CD4-positive, alpha-beta T cell (primary cell): ENCODE measurements at regions of chr3 and their contacts with region 1.

Region 1: GRCh38 chr3:115040673-115041286 is 106.3 kb downstream of the ZBTB20 start:
- DNase-seq: peak in 13 of 14 experiments; percentile 3 to 66 (median 25)
- ATAC-seq: peak; percentile 60
- H3K4me3 ChIP-seq: no peak overlapping the region
- H3K4me3 Mint-ChIP-seq: no peak overlapping the region
- H3K27ac ChIP-seq: no peak overlapping the region
- H3K27ac Mint-ChIP-seq: no peak overlapping the region
- H3K4me1 ChIP-seq: no peaks in the 10 kb centered on the region
- H3K4me1 Mint-ChIP-seq: peaks cover 19% of the 10 kb centered on the region
- H3K27me3 ChIP-seq: no peaks in the 10 kb centered on the region
- H3K27me3 Mint-ChIP-seq: no peaks in the 10 kb centered on the region
- CTCF ChIP-seq: peak; percentile 83

Region 2: GRCh38 chr3:115019900-115020299 is 20.9 kb before region 1 on chr3:
- CTCF ChIA-PET with region 1: no interaction called
- POLR2A ChIA-PET with region 1: no interaction called
- intact Hi-C with region 1: no loop called
- DNase-seq: no peak
- ATAC-seq: no peak
- H3K4me3 ChIP-seq: no peak overlapping the region
- H3K4me3 Mint-ChIP-seq: no peak overlapping the region
- H3K27ac ChIP-seq: no peak overlapping the region
- H3K27ac Mint-ChIP-seq: no peak overlapping the region
- H3K4me1 ChIP-seq: no peaks in the 10 kb centered on the region
- H3K4me1 Mint-ChIP-seq: no peaks in the 10 kb centered on the region
- H3K27me3 ChIP-seq: no peaks in the 10 kb centered on the region
- H3K27me3 Mint-ChIP-seq: no peaks in the 10 kb centered on the region
- CTCF ChIP-seq: no peak

Region 3: DNA sequence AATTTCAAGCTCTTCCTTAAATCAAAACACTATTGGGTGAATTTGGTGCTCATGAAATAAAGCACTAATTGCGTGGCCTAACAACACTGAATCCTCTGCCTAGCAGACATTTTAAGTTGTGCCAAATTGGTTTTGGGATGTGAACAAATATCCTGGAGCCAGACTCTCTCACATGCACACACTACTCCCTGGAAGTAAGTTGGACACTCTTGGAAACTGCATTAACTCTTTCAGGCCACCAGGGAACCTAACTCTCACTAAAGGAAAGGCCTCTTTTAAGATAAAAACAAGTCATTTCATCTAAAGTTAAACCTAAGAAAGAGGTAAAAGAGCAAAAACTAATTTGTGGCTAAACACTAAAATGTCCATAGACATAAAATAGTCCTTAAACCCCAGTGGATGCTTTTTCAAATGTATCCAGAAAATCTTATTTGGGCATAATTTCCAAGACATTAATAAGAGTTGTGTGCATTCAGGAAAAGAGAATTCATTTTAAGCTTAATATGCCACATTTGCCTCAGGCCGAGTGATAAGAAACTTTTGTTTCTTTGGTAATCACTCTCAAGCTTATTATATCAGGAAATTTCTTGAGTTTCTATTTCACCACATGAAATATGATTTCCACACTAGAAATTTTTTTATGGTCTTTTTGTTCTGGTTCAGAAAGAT is 44.6 kb after region 1 on chr3:
- CTCF ChIA-PET with region 1: no interaction called
- POLR2A ChIA-PET with region 1: no interaction called
- intact Hi-C with region 1: no loop called
- DNase-seq: no peak
- ATAC-seq: no peak
- H3K4me3 ChIP-seq: no peak overlapping the region
- H3K4me3 Mint-ChIP-seq: no peak overlapping the region
- H3K27ac ChIP-seq: no peak overlapping the region
- H3K27ac Mint-ChIP-seq: no peak overlapping the region
- H3K4me1 ChIP-seq: no peaks in the 10 kb centered on the region
- H3K4me1 Mint-ChIP-seq: peaks cover 67% of the 10 kb centered on the region
- H3K27me3 ChIP-seq: no peaks in the 10 kb centered on the region
- H3K27me3 Mint-ChIP-seq: no peaks in the 10 kb centered on the region
- CTCF ChIP-seq: no peak

Region 4: GRCh38 chr3:115099986-115100571 is 59.3 kb after region 1 on chr3:
- CTCF ChIA-PET with region 1: no interaction called
- POLR2A ChIA-PET with region 1: no interaction called
- intact Hi-C with region 1: loop called in 1 of 2 experiments (anchors 5 kb)
- DNase-seq: peak in 9 of 14 experiments; percentile 3 to 82 (median 28)
- ATAC-seq: peak; percentile 87
- H3K4me3 ChIP-seq: peak overlapping the region; percentile 46
- H3K4me3 Mint-ChIP-seq: peak overlapping the region; percentile 89
- H3K27ac ChIP-seq: peak overlapping the region in 1 of 2 donors; percentile 3
- H3K27ac Mint-ChIP-seq: peak overlapping the region; percentile 86
- H3K4me1 ChIP-seq: peaks cover 2% of the 10 kb centered on the region
- H3K4me1 Mint-ChIP-seq: peaks cover 66% of the 10 kb centered on the region
- H3K27me3 ChIP-seq: no peaks in the 10 kb centered on the region
- H3K27me3 Mint-ChIP-seq: no peaks in the 10 kb centered on the region
- CTCF ChIP-seq: no peak

Region 5: GRCh38 chr3:115814778-115815380 is 774.1 kb after region 1 on chr3:
- CTCF ChIA-PET with region 1: interaction called, 3 read pairs
- POLR2A ChIA-PET with region 1: no interaction called
- intact Hi-C with region 1: loop called in 1 of 2 experiments (anchors 5 kb)
- DNase-seq: peak; percentile 39 to 81 (median 60)
- ATAC-seq: peak; percentile 64
- H3K4me3 ChIP-seq: no peak overlapping the region
- H3K4me3 Mint-ChIP-seq: no peak overlapping the region
- H3K27ac ChIP-seq: no peak overlapping the region
- H3K27ac Mint-ChIP-seq: no peak overlapping the region
- H3K4me1 ChIP-seq: no peaks in the 10 kb centered on the region
- H3K4me1 Mint-ChIP-seq: no peaks in the 10 kb centered on the region
- H3K27me3 ChIP-seq: peaks cover 0 to 7% of the 10 kb centered on the region in 2 experiments
- H3K27me3 Mint-ChIP-seq: peaks cover 21% of the 10 kb centered on the region
- CTCF ChIP-seq: peak; percentile 95